ENCODE measurements at regions of chr5 and their contacts with region 1.

Region 1: GRCh38 chr5:56290378-56291078 is 57.4 kb upstream of the ANKRD55 start:
- DNase-seq: no peak
- ATAC-seq: no peak
- H3K4me3 ChIP-seq: no peak overlapping the region
- H3K27ac ChIP-seq: no peak overlapping the region
- H3K4me1 ChIP-seq: peaks cover 0 to 29% (median 13%) of the 10 kb centered on the region in 12 donors
- H3K27me3 ChIP-seq: no peaks in the 10 kb centered on the region
- CTCF ChIP-seq: no peak
- POLR2A ChIP-seq: no peak

Region 2: DNA sequence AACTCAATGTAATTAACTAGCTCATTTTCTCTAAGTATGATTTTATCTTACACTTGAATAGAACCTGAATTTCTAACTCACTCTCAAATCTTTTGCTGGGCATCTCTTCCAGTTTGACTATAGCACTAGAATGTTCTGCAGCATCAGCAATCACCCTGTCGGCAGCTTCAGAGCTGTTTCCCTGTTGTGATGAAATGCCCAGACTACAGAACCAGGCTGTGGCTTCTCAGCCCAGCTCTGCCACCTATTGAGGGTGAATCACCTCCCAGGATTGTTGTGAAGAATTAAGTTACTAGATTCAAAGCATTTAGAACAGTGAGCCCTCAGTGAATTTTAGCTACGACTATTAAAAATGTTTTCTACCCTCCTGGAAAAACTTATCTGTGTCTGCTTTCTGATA is 33.0 kb after region 1 on chr5:
- intact Hi-C with region 1: loop called in 1 of 10 experiments (anchors 1 kb)
- DNase-seq: no peak
- ATAC-seq: peak in 2 of 4 donors; percentile 38 to 52
- H3K4me3 ChIP-seq: no peak overlapping the region
- H3K27ac ChIP-seq: no peak overlapping the region
- H3K4me1 ChIP-seq: peaks cover 0 to 20% (median 10%) of the 10 kb centered on the region in 12 donors
- H3K27me3 ChIP-seq: no peaks in the 10 kb centered on the region
- CTCF ChIP-seq: peak in 1 of 12 donors; percentile 7
- POLR2A ChIP-seq: no peak